A673 (cell line): ENCODE measurements at regions of chr10 and their contacts with region 1.

Region 1: DNA sequence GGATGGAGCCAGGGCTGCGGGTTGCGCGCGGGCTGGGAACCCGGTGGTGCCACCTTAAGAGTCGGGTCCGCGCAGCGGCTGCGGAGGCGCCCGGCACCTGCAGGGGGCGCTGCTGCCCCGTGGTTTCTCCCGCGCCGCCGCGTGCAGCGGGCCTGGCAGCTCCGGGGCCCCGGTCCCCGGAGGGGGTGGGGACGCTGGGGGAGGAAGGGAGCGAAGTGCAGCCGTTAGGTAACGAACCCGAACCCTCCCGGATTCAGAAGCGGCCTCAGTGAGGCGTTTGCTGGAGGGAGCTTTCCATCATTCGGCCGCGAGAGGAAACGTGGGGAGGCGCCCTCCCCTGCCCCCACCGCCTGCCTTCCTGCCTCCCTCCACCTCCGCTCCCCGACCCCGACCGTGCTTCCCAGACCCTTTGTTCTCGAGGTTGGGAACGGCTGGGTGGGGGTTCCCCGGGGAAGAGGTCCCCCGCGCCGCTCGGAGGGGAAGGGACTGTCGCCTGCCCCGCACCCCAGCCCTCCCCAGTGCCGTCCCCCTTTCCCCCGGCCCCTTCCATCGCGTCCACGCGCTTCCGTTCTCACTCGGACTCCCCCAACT is 29.6 kb downstream of the SKIDA1 start:
- DNase-seq: peak; percentile 93
- H3K4me3 ChIP-seq: peak overlapping the region; percentile 92
- H3K27ac ChIP-seq: peak overlapping the region; percentile 92
- H3K4me1 ChIP-seq: peaks cover 9% of the 10 kb centered on the region
- H3K27me3 ChIP-seq: no peaks in the 10 kb centered on the region
- CTCF ChIP-seq: peak; percentile 84

Region 2: GRCh38 chr10:21278491-21279239 is 217.2 kb before region 1 on chr10:
- CTCF ChIA-PET with region 1: interaction called, 6 read pairs
- POLR2A ChIA-PET with region 1: no interaction called
- intact Hi-C with region 1: loop called (anchors 1 kb)
- DNase-seq: peak; percentile 95
- H3K4me3 ChIP-seq: no peak overlapping the region
- H3K27ac ChIP-seq: no peak overlapping the region
- H3K4me1 ChIP-seq: peaks cover 18% of the 10 kb centered on the region
- H3K27me3 ChIP-seq: no peaks in the 10 kb centered on the region
- CTCF ChIP-seq: peak; percentile 92

Region 3: DNA sequence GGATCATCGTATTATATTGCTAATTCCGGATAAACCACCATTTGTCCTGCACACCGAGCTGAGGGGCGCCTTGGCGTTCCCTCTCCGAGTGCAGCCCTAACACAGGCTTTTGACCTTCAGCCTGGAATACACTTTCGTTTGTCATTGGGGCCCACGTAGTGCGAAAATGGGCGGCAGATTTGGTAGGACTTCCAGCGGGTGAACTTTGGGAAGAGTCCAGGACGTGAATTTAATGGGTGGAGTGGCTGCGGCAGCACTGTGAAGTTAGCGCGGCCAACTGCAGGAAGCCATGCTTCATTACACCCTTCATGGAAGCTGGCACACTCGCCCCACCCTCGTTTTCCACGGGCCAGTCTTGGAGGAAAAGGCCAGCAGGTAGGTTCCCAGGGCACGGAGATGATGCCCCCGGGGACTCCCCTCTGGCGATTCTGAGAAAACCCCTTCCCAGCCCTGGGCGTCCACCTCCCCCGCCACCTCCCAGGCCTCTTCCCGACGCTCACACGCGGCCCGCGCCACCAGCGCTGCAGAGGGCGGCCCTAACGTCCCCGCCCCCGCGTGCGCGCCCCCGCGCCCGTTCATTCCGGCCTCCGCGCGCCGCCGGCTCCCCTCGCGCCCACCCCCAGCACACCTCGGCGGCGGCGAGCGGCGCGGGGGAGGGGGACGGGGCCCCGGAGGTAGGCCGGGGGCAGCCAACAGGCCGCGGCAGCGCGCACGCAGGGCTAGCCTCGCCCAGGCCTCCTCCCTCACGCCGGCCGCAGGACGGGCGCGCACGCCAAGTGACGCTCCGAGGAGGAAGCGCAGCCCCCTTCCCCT is 37.8 kb after region 1 on chr10 and contains the start of gene MLLT10:
- CTCF ChIA-PET with region 1: no interaction called
- POLR2A ChIA-PET with region 1: no interaction called
- intact Hi-C with region 1: loop called (anchors 5 kb)
- DNase-seq: peak; percentile 99
- H3K4me3 ChIP-seq: peak within 1 kb of the TSS; percentile 65
- H3K27ac ChIP-seq: peak within 1 kb of the TSS; percentile 96
- H3K4me1 ChIP-seq: peaks cover 41% of the 10 kb centered on the region
- H3K27me3 ChIP-seq: no peaks in the 10 kb centered on the region
- CTCF ChIP-seq: no peak
- total RNA-seq, gene MLLT10: 58.4 and 60.0 TPM in 2 replicates

Region 4: GRCh38 chr10:21953585-21954057 is 457.8 kb after region 1 on chr10:
- CTCF ChIA-PET with region 1: no interaction called
- POLR2A ChIA-PET with region 1: no interaction called
- intact Hi-C with region 1: loop called (anchors 2 kb)
- DNase-seq: peak; percentile 77
- H3K4me3 ChIP-seq: no peak overlapping the region
- H3K27ac ChIP-seq: no peak overlapping the region
- H3K4me1 ChIP-seq: peaks cover 18% of the 10 kb centered on the region
- H3K27me3 ChIP-seq: no peaks in the 10 kb centered on the region
- CTCF ChIP-seq: peak; percentile 62

Region 5: GRCh38 chr10:21969326-21970287 is 473.8 kb after region 1 on chr10:
- CTCF ChIA-PET with region 1: no interaction called
- POLR2A ChIA-PET with region 1: no interaction called
- intact Hi-C with region 1: no loop called
- DNase-seq: no peak
- H3K4me3 ChIP-seq: no peak overlapping the region
- H3K27ac ChIP-seq: no peak overlapping the region
- H3K4me1 ChIP-seq: no peaks in the 10 kb centered on the region
- H3K27me3 ChIP-seq: no peaks in the 10 kb centered on the region
- CTCF ChIP-seq: no peak